ENCODE measurements at regions of chr19 and their contacts with region 1.

Region 1: DNA sequence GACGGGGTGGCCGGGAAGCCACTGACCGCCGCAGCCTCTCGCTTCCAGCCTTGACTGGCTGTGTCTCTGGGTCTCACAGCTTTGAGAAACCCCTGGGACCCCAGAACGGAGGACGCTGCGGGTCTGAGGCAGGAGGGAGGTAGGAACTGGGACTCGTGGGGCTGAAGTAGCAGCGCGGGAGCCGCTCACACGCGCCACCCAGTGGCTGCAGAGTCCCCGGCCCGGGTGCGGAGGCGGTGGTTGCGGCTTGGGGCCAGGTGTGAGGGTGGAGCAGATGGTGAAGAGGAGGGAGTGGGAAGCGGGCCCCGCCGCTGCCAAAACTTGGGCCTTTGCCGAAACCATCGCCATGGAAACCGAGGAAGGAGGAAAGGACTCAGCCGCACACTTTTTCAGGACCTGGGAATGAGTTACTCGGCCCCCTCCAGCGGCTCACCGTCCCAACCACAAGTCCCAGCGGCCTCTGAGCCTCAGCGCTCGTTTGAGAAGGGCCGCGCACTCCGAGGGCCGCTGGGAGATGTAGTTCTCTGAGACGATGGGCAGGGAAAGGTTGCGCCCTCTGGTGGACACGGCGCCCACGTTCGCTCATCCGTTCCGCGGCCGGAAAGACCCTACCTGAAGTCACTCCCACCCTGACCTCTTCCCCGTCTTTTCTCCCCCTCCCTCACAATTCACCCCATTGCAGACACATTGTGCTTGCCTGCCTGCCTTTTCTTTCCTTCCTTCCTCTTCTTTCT is 2.2 kb upstream of the SLC17A7 start:
- DNase-seq: peak; percentile 97
- ATAC-seq: peak; percentile 91
- H3K4me3 Mint-ChIP-seq: peak overlapping the region; percentile 73
- H3K27ac Mint-ChIP-seq: peak overlapping the region; percentile 83
- H3K4me1 Mint-ChIP-seq: peaks cover 33% of the 10 kb centered on the region
- H3K27me3 Mint-ChIP-seq: peaks cover 37% of the 10 kb centered on the region

Region 2: DNA sequence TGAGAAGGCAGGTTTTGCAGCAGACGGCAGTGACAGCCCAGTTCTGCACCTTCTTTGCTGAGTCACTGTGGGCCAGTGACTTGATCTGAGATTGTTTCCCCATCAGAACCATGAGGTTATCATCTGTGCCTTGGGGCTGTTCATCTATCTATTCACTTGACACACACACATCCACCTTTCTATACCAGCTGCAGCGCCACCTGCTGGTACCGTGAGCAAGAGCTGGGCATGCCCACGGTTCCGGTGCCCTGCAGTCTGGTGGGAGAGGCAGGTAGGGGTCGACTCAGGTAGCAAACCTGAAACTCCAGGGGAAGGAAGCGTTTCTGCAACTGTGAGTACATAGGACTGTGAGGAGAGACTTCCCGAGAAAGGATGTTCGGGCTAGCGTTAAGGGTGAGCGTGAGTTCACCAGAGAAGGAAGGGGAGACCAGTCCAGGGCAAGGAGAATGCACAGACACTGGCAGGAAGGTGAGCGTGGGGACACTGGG is 336.8 kb before region 1 on chr19:
- CTCF ChIA-PET with region 1: no interaction called
- POLR2A ChIA-PET with region 1: no interaction called
- intact Hi-C with region 1: no loop called
- DNase-seq: peak; percentile 82
- ATAC-seq: peak; percentile 84
- H3K4me3 Mint-ChIP-seq: no peak overlapping the region
- H3K27ac Mint-ChIP-seq: no peak overlapping the region
- H3K4me1 Mint-ChIP-seq: peaks cover 4% of the 10 kb centered on the region
- H3K27me3 Mint-ChIP-seq: no peaks in the 10 kb centered on the region

Region 3: DNA sequence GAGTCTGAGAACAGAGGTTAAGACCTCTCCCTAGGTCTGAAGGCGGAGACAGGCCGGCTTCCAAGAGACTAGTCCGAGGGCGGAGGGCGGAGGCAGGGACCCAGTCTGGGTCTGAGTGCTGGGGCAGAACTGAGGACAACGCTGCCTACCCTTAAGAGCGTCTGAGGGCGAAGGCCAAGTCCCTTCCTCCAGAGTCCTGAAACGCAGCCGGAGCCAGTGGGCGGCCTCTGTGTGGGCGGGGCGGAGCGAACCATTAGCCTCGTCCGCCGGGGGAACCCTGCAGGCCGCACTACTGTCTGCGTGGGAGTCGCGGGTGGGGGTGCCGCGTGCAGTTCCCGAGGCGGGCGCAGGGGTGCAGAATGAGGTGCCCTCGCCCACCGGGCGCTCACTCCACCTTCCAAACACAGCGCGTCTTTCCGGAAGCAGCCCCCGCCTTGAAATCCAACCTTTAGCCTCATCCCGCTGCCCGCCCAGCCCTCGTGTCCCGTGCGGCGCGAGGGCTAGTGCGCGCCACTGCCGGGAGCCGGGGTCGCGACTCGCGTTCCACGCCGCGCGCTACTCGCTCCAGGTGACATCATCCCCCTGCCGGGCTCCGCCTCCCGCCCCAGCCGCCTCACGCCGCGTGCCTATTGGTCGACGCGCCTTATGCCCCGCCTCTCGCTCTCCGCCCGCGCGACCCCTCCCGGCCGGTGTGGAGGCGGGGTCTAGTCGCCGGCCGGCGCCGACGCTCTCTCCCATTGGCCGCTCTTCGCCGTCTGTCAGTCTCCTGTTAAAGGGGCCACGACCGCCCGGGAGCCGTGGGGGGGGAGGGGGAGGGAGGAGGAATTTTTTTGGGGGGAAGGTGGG is 324.7 kb before region 1 on chr19 and contains the start of gene C19orf73:
- CTCF ChIA-PET with region 1: no interaction called
- POLR2A ChIA-PET with region 1: no interaction called
- intact Hi-C with region 1: loop called in 1 of 2 experiments (anchors 2 kb)
- DNase-seq: peak; percentile 98
- ATAC-seq: peak; percentile 85
- H3K4me3 Mint-ChIP-seq: peak within 1 kb of the TSS; percentile 80
- H3K27ac Mint-ChIP-seq: peak within 1 kb of the TSS; percentile 84
- H3K4me1 Mint-ChIP-seq: peaks cover 28% of the 10 kb centered on the region
- H3K27me3 Mint-ChIP-seq: peaks cover 8% of the 10 kb centered on the region
- total RNA-seq, gene C19orf73: 1.7 to 2.0 TPM

Region 4: DNA sequence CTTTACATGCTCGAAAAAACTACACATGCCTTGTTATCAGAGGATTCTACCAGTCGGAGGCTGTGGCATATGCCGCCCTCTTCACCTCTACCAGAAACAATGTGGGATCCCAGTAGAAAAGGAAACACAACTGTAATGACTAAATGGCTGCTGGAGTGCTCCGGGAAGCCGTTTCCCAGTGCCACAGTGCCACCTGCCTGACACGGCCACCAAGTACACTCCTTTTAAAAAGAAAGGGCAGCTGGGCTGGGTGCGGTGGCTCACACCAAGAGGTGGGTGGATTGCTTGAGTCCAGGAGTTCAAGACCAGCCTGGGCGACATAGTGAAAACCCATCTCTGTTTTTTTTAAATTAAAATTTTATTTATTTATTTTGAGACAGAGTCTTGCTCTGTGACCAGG is 218.7 kb before region 1 on chr19:
- CTCF ChIA-PET with region 1: no interaction called
- POLR2A ChIA-PET with region 1: no interaction called
- intact Hi-C with region 1: loop called (anchors 1 kb)
- DNase-seq: peak; percentile 74
- ATAC-seq: peak; percentile 78
- H3K4me3 Mint-ChIP-seq: no peak overlapping the region
- H3K27ac Mint-ChIP-seq: no peak overlapping the region
- H3K4me1 Mint-ChIP-seq: peaks cover 4% of the 10 kb centered on the region
- H3K27me3 Mint-ChIP-seq: peaks cover 4% of the 10 kb centered on the region

Region 5: GRCh38 chr19:49391581-49392399 is 51.7 kb before region 1 on chr19:
- CTCF ChIA-PET with region 1: interaction called, 5 read pairs
- POLR2A ChIA-PET with region 1: no interaction called
- intact Hi-C with region 1: loop called (anchors 1 kb)
- DNase-seq: peak; percentile 90
- ATAC-seq: peak; percentile 83
- H3K4me3 Mint-ChIP-seq: no peak overlapping the region
- H3K27ac Mint-ChIP-seq: no peak overlapping the region
- H3K4me1 Mint-ChIP-seq: peaks cover 16% of the 10 kb centered on the region
- H3K27me3 Mint-ChIP-seq: no peaks in the 10 kb centered on the region

Region 6: DNA sequence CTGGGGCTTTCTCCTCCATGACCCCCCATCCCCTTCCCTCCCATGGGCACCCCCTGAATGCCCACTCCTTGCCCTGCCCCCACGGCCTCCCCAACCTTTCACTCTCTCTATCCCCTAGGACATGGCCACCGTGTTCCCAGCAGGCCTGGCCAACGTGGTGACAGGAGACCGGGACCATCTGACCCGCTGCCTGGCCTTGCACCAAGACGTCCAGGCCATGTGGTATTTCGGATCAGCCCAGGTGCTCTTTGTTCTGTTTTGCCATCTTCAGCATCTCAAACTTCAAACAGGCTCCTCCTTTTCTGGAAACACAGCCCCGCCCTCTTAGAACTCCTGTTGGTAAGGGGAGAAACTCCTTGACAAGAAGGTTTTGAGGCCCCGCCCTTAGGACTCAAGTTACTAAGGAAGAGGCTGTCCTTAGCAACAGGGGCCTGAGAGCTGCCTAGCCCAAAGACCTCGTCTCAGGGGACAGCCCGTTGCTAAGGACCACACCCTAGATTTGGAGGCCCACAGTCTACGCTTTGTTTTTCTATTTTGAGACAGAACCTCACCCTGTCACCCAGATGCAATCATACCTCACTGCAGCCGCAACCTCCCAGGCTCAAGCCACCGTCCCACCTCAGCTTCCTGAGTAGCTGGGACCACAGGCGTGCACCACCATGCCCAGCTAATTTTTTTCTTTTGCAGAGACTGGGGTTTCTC is 25.4 kb after region 1 on chr19:
- CTCF ChIA-PET with region 1: interaction called, 7 read pairs
- POLR2A ChIA-PET with region 1: no interaction called
- intact Hi-C with region 1: loop called (anchors 1 kb)
- DNase-seq: peak; percentile 88
- ATAC-seq: peak; percentile 75
- H3K4me3 Mint-ChIP-seq: peak overlapping the region; percentile 64
- H3K27ac Mint-ChIP-seq: peak overlapping the region; percentile 98
- H3K4me1 Mint-ChIP-seq: peaks cover 49% of the 10 kb centered on the region
- H3K27me3 Mint-ChIP-seq: no peaks in the 10 kb centered on the region

Region 7: DNA sequence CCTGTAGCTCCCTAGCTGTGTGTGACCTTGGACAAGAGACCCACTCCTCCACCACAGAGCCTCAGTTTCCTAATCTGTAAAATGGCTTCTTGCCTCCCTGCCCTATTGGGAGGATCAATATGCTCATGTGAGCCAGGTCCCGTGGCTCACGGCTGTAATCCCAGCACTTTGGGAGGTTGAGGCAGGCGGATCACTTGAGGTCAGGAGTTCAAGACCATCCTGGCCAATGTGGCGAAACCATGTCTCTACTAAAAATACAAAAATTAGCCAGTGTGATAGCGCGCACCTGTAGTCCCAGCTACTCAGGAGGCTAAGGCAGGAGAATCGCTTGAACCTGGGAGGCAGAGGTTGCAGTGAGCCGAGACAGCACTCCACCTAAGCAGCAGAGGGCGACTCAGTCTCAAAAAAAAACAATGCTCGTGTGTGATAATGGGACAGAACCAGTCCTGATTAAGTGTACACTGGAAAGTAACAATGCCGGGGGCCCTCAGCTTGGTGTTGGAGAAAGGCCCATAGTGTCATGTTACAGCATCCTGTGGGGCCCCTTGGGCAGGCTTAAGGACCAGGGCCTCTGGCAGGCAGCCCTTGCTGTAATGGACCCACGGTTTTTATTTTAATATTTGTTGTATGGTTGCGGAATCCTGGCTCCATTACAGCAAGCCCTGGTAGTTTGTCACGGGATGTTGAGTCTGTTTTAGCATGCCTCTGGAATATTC is 59.5 kb after region 1 on chr19:
- CTCF ChIA-PET with region 1: no interaction called
- POLR2A ChIA-PET with region 1: no interaction called
- intact Hi-C with region 1: no loop called
- DNase-seq: peak; percentile 65
- ATAC-seq: peak; percentile 28
- H3K4me3 Mint-ChIP-seq: no peak overlapping the region
- H3K27ac Mint-ChIP-seq: no peak overlapping the region
- H3K4me1 Mint-ChIP-seq: peaks cover 44% of the 10 kb centered on the region
- H3K27me3 Mint-ChIP-seq: no peaks in the 10 kb centered on the region

Region 8: GRCh38 chr19:49528211-49528771 is 84.8 kb after region 1 on chr19:
- CTCF ChIA-PET with region 1: no interaction called
- POLR2A ChIA-PET with region 1: no interaction called
- intact Hi-C with region 1: no loop called
- DNase-seq: peak; percentile 29
- ATAC-seq: no peak
- H3K4me3 Mint-ChIP-seq: peak overlapping the region; percentile 73
- H3K27ac Mint-ChIP-seq: no peak overlapping the region
- H3K4me1 Mint-ChIP-seq: peaks cover 18% of the 10 kb centered on the region
- H3K27me3 Mint-ChIP-seq: no peaks in the 10 kb centered on the region

Measured in activated CD4-positive, alpha-beta T cell treated with anti-CD3 and anti-CD28 coated beads for 36 hours (primary cell).